Natural killer cell (primary cell): ENCODE measurements at regions of chr16 and their contacts with region 1.

Region 1: DNA sequence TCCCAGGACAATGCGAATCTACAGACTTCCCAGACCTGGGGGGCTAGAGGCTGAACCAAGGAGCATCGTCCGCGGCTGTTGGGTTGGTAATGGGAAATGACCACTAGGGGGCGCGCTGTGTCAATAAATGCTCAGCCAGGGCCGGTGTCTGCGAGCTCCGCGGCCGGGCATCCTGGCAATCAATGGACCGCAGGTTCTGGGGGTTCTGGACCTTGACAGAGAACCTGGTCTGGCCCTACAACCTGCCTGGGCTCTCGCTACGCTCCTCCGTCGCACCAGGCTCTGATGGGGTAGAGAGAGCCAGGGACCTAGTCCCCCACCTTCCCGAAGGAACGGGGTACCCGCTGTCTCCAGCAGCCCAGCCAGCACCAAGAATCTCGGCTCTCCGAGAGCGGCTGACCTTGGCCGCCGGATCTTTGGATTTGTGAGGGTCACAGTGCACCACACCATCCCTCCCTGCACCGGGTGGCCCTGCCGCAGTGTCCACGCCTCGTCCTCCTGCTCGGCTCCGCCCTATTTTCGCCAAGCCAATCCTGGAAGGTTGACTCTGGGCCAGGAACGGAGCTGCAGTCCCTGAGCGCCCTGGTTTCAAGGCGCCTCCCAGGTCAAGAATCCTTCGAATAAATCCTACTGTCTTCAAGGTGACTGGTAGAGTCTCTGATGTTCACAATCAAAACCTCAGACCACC is 20.4 kb upstream of the BEAN1 start:
- DNase-seq: peak; percentile 85 to 91
- ATAC-seq: peak; percentile 90 to 96 (median 92)
- H3K4me3 ChIP-seq: peak overlapping the region; percentile 34
- H3K4me3 Mint-ChIP-seq: peak overlapping the region; percentile 83
- H3K27ac ChIP-seq: no peak overlapping the region
- H3K27ac Mint-ChIP-seq: no peak overlapping the region
- H3K4me1 ChIP-seq: peaks cover 12% of the 10 kb centered on the region
- H3K4me1 Mint-ChIP-seq: peaks cover 6 to 12% of the 10 kb centered on the region in 2 donors
- H3K27me3 ChIP-seq: peaks cover 3% of the 10 kb centered on the region
- H3K27me3 Mint-ChIP-seq: peaks cover 22 to 40% of the 10 kb centered on the region in 2 donors
- CTCF ChIP-seq: peak; percentile 83

Region 2: GRCh38 chr16:66483689-66484481 is 77.2 kb after region 1 on chr16:
- intact Hi-C with region 1: loop called (anchors 1 kb)
- DNase-seq: peak; percentile 65 to 82
- ATAC-seq: peak; percentile 85 to 93 (median 86)
- H3K4me3 ChIP-seq: no peak overlapping the region
- H3K4me3 Mint-ChIP-seq: no peak overlapping the region
- H3K27ac ChIP-seq: no peak overlapping the region
- H3K27ac Mint-ChIP-seq: no peak overlapping the region
- H3K4me1 ChIP-seq: peaks cover 22% of the 10 kb centered on the region
- H3K4me1 Mint-ChIP-seq: peaks cover 9 to 13% of the 10 kb centered on the region in 2 donors
- H3K27me3 ChIP-seq: no peaks in the 10 kb centered on the region
- H3K27me3 Mint-ChIP-seq: no peaks in the 10 kb centered on the region
- CTCF ChIP-seq: peak; percentile 91

Region 3: DNA sequence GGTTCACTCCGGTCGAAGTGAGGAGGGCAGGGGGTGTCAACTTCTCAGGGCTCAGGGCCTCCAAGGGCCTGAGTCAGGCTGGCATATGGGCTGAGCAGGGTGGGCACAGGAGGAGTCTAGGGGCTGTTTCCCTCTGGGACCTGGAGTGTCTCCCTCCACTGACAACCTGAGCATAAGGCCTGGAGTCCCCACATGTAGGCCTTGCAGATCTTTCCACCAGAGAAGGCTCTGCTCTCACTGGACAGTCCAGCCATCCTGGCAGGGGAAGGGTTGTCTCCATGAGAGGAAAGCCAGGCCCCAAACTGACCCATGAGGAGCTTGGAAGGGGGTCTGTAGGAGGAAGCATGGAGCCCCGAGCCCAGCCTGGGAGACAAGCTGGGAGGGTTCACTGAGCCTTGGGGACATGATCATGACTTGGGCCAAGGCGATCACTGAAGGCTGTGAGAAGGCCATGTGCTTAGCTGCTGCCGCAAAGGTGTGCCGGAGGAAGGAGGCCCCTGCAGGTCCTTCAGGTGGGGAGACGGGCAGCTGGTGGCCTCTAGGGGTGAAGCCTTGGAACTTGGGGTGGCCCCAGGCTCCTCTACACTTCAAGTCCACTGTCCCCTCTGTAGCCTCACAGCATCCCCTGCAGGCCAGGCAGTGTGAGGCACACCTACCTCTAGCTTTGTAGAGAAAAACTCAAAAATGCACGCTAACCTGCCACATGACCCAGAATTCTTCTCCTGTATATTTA is 182.5 kb after region 1 on chr16:
- intact Hi-C with region 1: loop called (anchors 1 kb)
- DNase-seq: peak; percentile 60 to 82
- ATAC-seq: peak; percentile 98 to 100 (median 99)
- H3K4me3 ChIP-seq: no peak overlapping the region
- H3K4me3 Mint-ChIP-seq: peak overlapping the region; percentile 77
- H3K27ac ChIP-seq: no peak overlapping the region
- H3K27ac Mint-ChIP-seq: peak overlapping the region; percentile 19 to 63
- H3K4me1 ChIP-seq: peaks cover 15% of the 10 kb centered on the region
- H3K4me1 Mint-ChIP-seq: peaks cover 16 to 17% of the 10 kb centered on the region in 2 donors
- H3K27me3 ChIP-seq: no peaks in the 10 kb centered on the region
- H3K27me3 Mint-ChIP-seq: peaks cover 0 to 2% of the 10 kb centered on the region in 2 donors
- CTCF ChIP-seq: peak; percentile 86

Region 4: DNA sequence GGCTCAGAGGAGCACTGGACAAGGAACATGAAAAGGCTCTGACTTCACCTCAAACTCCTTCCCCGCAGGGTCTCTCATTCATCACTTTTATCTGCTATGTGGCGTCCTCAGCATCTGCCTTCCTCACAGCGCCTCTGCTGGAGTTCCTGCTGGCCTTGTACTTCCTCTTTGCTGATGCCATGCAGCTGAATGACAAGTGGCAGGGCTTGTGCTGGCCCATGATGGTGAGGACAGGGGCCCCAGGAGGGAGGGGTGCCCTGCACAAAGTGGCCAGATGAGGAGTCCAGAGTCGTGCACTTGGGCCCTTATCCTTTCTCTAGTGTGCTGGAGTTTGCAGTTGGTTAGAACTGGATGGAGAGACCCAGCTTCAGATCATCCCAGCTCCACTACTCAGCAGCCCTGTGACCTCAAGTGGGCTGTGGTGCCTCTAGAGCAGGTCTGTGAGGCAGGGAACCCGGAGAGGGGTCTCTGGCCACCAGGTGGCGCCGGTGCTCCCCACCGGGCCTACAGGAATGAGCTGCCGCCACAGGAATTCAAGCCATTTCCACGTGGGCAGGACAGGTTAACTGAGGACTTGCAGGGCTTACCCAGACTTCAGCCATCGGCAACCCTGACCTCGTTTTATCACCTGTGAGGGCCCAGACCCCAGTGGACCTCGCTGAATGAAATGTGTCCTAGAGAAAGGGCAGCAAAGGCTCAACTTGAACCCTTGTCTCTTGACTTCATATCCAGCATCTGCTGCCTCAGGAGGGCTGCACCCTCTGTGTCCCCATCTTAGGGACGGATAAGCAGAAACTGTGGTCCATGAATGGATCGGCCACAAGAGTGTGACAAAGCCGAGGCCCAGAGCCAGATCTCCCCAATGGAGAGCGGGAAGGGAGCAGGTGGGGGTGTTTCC is 201.8 kb after region 1 on chr16:
- intact Hi-C with region 1: loop called (anchors 1 kb)
- DNase-seq: peak; percentile 72 to 88
- ATAC-seq: peak; percentile 22 to 41 (median 40)
- H3K4me3 ChIP-seq: no peak overlapping the region
- H3K4me3 Mint-ChIP-seq: peak overlapping the region; percentile 53
- H3K27ac ChIP-seq: no peak overlapping the region
- H3K27ac Mint-ChIP-seq: peak overlapping the region; percentile 56 to 77
- H3K4me1 ChIP-seq: peaks cover 46% of the 10 kb centered on the region
- H3K4me1 Mint-ChIP-seq: peaks cover 21 to 35% of the 10 kb centered on the region in 2 donors
- H3K27me3 ChIP-seq: no peaks in the 10 kb centered on the region
- H3K27me3 Mint-ChIP-seq: no peaks in the 10 kb centered on the region
- CTCF ChIP-seq: peak; percentile 84

Region 5: GRCh38 chr16:66728117-66728787 is 321.6 kb after region 1 on chr16:
- intact Hi-C with region 1: loop called (anchors 5 kb)
- DNase-seq: peak in 1 of 2 donors; percentile 64
- ATAC-seq: peak; percentile 82 to 88 (median 84)
- H3K4me3 ChIP-seq: no peak overlapping the region
- H3K4me3 Mint-ChIP-seq: no peak overlapping the region
- H3K27ac ChIP-seq: no peak overlapping the region
- H3K27ac Mint-ChIP-seq: peak overlapping the region; percentile 7 to 17
- H3K4me1 ChIP-seq: no peaks in the 10 kb centered on the region
- H3K4me1 Mint-ChIP-seq: peaks cover 7% of the 10 kb centered on the region in 2 donors
- H3K27me3 ChIP-seq: no peaks in the 10 kb centered on the region
- H3K27me3 Mint-ChIP-seq: no peaks in the 10 kb centered on the region
- CTCF ChIP-seq: peak; percentile 76

Region 6: GRCh38 chr16:66740010-66740409 is 333.3 kb after region 1 on chr16:
- intact Hi-C with region 1: loop called (anchors 5 kb)
- DNase-seq: peak in 1 of 2 donors; percentile 69
- ATAC-seq: peak; percentile 54 to 61 (median 61)
- H3K4me3 ChIP-seq: no peak overlapping the region
- H3K4me3 Mint-ChIP-seq: no peak overlapping the region
- H3K27ac ChIP-seq: no peak overlapping the region
- H3K27ac Mint-ChIP-seq: peak overlapping the region in 1 of 2 donors; percentile 11
- H3K4me1 ChIP-seq: no peaks in the 10 kb centered on the region
- H3K4me1 Mint-ChIP-seq: peaks cover 12 to 24% of the 10 kb centered on the region in 2 donors
- H3K27me3 ChIP-seq: no peaks in the 10 kb centered on the region
- H3K27me3 Mint-ChIP-seq: no peaks in the 10 kb centered on the region
- CTCF ChIP-seq: peak; percentile 74